ENCODE measurements at regions of chr10 and their contacts with region 1.

Region 1: GRCh38 chr10:35421553-35422178 is 85.4 kb downstream of the CCNY start:
- DNase-seq: no peak
- CTCF ChIP-seq: no peak

Region 2: DNA sequence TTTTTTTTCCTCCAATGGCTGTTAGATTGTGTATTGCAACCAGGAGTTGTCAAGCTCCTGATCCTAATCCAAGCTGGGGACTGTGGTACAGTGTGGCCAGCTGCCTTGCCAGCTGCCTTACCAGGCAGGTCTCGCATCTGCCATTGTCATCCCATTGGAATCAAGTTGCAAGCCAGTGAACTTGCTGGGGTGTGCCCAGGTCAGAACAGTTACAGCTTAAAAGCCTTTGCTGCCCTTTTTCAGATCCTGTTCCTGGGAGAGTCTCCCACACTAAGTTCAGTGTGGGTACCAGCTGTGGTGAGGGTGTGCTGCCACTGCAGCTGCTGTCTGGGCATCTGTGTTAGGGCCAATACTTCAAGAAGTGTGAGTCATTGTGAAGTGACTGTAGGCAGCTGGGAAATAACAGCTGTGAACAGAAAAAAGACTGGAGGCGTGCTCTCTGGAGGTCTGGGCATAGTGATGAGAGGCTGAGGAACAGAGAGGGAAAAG is 12.5 kb before region 1 on chr10:
- CTCF ChIA-PET with region 1: interaction called, 16 read pairs
- POLR2A ChIA-PET with region 1: no interaction called
- DNase-seq: no peak
- CTCF ChIP-seq: no peak

Region 3: GRCh38 chr10:35433851-35434426 is 12.3 kb after region 1 on chr10:
- CTCF ChIA-PET with region 1: no interaction called
- POLR2A ChIA-PET with region 1: no interaction called
- DNase-seq: no peak
- CTCF ChIP-seq: no peak

Measured in GM10248 (cell line).